ENCODE measurements at regions of chr15 and their contacts with region 1.

Region 1: DNA sequence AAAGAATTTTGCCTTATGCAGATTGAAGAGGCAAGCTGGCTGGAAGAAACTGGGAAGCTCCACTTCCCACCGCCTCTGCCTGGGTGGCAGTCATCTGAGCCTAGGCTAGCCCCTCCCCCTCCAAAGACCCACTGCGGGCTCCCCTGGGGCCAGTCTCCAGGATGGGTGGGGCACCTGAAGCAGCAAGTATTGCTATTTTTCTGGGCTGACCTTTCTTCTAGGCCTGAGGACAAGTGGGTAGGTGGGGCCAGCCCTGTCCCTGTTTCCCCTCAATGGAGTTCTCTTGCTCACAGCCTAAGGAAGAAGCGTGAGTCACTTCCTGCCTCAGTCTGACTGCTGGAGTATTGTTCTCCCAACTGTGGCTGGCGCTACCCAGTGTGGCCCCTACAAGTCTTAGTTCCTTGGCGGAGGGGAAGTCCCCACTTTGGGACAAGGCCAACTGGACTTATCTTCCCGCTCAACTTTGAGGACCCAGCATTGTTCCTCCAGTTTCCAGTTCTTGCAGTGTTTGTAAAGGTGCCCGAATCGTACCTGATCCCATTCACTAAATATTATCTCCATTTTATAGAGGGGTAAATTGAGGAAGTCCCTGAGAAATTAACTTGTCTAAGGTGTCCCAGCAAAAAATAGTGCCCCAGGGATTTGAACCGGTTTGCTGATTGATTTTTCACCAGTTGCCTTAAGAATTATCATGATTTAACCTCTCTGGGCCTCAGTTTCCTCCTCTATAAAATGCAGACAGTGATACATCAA is 1.4 kb downstream of the FURIN start:
- DNase-seq: peak; percentile 63
- H3K4me3 Mint-ChIP-seq: peak overlapping the region; percentile 85
- H3K27ac Mint-ChIP-seq: peak overlapping the region; percentile 91
- H3K4me1 Mint-ChIP-seq: peaks cover 59% of the 10 kb centered on the region
- H3K27me3 Mint-ChIP-seq: no peaks in the 10 kb centered on the region

Region 2: DNA sequence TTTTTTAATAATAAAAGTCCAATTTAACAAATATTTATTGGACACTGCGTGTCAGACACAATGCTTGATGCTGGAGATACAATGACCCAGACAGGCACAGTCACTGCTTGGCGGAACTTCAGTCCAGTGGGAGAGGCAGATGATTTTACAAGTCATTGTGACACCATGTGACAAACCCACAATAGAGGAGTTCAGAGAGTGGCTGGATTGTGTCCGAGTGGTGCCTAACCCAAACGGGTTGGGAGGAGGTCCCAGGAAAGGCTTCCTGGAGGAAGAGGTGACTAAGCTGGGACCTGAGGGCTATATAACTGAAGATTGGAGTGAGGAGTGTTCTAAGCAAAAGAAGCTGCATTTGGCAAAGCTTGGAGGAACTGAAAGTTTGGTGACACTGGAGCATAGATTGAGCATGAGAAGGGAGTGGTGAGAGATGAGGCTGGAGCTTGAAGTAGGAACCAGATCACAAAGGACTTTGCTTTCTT is 298.7 kb before region 1 on chr15:
- CTCF ChIA-PET with region 1: no interaction called
- POLR2A ChIA-PET with region 1: no interaction called
- DNase-seq: no peak
- H3K4me3 Mint-ChIP-seq: no peak overlapping the region
- H3K27ac Mint-ChIP-seq: peak overlapping the region; percentile 37
- H3K4me1 Mint-ChIP-seq: peaks cover 83% of the 10 kb centered on the region
- H3K27me3 Mint-ChIP-seq: no peaks in the 10 kb centered on the region

Region 3: DNA sequence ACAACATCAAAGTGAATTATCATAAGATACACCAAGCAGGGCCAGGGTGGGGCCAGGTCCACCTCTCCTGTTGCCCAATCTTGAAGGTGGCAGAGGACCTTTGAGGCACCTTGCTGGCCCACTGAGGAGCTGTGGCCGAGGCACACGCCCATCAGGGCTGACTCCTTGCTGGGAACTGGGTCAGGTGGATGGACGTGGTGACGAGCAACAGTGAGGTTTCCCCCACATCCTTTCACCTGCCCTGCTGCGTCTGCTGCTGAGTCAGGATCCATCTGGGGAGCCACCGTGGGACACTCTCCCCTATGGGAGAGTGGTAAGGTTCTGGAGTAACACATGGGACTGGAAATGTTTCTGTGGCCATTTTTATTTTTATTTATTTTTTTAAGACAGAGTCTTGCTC is 18.7 kb before region 1 on chr15:
- CTCF ChIA-PET with region 1: interaction called, 3 read pairs
- POLR2A ChIA-PET with region 1: interaction called, 93 read pairs
- DNase-seq: peak; percentile 80
- H3K4me3 Mint-ChIP-seq: peak overlapping the region; percentile 63
- H3K27ac Mint-ChIP-seq: peak overlapping the region; percentile 91
- H3K4me1 Mint-ChIP-seq: peaks cover 77% of the 10 kb centered on the region
- H3K27me3 Mint-ChIP-seq: no peaks in the 10 kb centered on the region

Region 4: DNA sequence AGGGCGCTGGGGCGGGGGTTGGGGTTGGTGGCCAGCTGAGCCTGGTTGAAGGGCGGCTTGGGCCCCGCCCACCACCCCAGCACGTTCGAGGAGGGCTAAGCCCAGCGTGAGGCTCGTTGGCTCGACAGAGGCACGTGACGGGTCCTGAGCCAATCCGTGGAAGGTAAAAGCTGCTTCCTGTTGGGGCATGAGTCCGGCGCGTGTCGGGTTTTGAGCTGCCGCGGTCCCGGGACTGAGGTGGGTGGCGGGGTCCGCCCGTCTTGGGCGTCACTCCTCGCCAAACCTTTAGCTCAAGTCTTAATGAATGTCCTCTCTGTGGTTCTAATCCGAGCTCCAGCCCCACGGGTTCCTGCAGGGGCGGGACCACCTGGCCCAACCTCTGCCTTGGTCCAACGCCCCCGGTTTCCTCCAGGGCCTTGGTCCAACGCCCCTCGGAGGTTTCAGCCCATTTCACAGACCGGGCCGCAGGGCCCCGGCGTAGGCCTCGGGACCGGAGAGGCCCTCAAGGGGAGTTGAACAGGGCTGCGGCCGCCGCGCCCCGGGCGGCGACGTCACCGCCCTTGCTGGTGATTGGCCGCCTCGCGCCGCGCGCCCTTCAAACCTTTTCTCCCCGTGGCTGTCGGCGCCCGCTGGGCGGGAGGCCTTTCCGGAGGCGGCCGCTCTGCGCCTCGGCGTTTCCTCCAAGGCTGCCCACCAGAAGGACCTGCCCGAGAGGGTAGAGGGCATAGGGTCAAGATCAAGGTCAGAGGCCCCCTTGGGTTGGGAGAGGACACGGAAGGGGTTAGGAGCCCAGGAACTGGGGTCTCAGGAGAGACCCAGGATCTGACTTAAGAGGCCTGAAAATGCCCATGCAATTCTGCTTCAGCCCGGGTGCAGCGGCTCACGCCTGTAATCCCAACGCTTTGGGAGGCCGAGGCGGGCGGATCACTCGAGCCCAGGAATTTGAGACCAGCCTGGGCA is 85.2 kb after region 1 on chr15 and contains the start of gene RCCD1:
- CTCF ChIA-PET with region 1: no interaction called
- POLR2A ChIA-PET with region 1: no interaction called
- DNase-seq: peak; percentile 94
- H3K4me3 Mint-ChIP-seq: peak within 1 kb of the TSS; percentile 85
- H3K27ac Mint-ChIP-seq: peak within 1 kb of the TSS; percentile 93
- H3K4me1 Mint-ChIP-seq: peaks cover 31% of the 10 kb centered on the region
- H3K27me3 Mint-ChIP-seq: no peaks in the 10 kb centered on the region
- total RNA-seq, gene RCCD1: 31.3 to 32.8 TPM

Region 5: GRCh38 chr15:90970274-90970673 is 100.5 kb after region 1 on chr15:
- CTCF ChIA-PET with region 1: no interaction called
- POLR2A ChIA-PET with region 1: no interaction called
- DNase-seq: no peak
- H3K4me3 Mint-ChIP-seq: no peak overlapping the region
- H3K27ac Mint-ChIP-seq: no peak overlapping the region
- H3K4me1 Mint-ChIP-seq: no peaks in the 10 kb centered on the region
- H3K27me3 Mint-ChIP-seq: no peaks in the 10 kb centered on the region

Measured in activated CD4-positive, alpha-beta memory T cell treated with anti-CD3 and anti-CD28 coated beads, Interleukin-2, amount 10 ng/mL, durations not matched to agents 7 days and 5 days (primary cell).